Vagina (tissue), 2 donors: ENCODE measurements at regions of chr11 and their contacts with region 1.

Region 1: DNA sequence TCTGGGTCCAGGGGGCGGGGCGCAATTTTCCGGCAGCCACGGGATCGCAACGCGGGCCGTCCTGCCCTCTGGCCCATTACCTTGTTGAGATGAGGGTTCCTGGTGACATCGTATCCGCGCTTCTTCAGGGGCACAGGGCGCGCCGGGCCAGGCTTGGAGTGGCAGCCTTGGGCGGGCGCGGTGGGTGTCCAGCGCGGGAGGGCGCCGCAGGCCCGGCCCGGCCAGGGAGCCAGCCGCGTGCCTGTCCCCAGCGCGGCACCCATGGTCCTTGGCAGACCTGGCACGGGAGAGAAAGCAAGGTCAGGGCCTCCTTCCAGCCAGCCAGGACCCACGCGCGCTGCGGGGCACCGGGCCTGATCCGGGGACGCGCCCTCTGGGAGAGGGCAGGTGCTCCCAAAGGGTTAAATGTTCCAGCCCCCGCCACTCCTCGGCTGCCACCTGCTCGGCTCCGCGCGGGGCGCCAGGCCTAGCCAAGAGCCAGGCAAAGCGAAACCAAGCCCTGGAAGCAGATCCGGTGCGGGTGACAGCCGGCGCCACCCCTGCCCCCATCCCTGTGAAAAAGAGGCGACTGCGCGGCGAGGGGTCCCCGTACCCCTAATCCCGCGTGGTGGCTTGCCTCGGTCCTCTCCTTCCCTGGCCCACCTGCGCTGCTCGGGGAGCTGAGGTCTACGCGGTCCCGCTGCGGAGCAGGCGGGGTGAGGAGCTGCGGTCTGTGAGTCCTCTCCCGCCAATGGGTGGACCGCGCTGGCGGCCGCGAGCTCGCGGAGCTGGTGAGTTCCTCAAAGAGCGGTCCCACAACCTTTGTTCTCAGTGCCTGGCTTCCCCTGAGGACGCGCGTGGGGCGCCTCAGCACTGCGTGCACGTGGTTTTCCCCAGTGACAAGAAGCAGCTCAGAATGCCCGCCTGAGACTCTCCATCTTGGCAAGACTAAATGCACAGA is at the start of gene ME3:
- DNase-seq: no peak
- H3K4me3 ChIP-seq: peak within 1 kb of the TSS; percentile 82 to 86
- H3K27ac ChIP-seq: peak within 1 kb of the TSS; percentile 97
- H3K4me1 ChIP-seq: peaks cover 22% of the 10 kb centered on the region
- H3K27me3 ChIP-seq: no peaks in the 10 kb centered on the region
- CTCF ChIP-seq: no peak
- POLR2A ChIP-seq: peak in 1 of 2 donors; percentile 27
- total RNA-seq, gene ME3: 28.5 TPM

Region 2: GRCh38 chr11:86515297-86516094 is 156.5 kb before region 1 on chr11:
- intact Hi-C with region 1: no loop called
- DNase-seq: no peak
- H3K4me3 ChIP-seq: no peak overlapping the region
- H3K27ac ChIP-seq: no peak overlapping the region
- H3K4me1 ChIP-seq: peaks cover 32% of the 10 kb centered on the region
- H3K27me3 ChIP-seq: no peaks in the 10 kb centered on the region
- CTCF ChIP-seq: no peak
- POLR2A ChIP-seq: no peak

Region 3: DNA sequence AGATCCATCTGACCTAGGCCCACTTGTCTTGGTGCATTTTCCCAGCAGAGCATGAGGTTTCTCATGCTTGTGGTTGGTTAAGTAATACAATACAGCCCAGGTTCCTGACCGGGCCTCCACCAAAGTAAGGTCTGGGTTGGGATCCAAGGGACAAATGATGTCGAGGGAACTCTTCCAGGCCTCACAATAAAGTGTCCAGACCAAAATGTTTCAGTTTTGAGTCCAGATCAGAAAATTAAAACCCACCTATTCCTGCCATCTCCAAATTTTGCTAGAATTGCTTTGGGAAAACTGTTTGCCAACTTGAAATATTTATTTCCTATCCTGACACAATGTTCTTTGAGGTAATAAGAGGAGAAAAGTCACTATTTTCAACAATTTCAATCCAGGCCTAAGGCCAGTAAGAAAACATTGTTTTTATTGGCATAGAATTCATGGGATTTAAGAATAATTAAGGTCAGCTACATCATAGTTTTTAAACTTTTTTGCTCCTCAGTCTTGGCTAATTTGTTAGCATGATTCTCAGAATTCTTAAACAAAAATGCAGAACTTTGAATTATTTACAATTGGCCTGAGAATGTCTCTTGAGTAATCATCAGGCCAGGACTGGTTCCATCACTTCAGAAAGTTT is 50.9 kb before region 1 on chr11:
- intact Hi-C with region 1: loop called (anchors 10 kb)
- DNase-seq: no peak
- H3K4me3 ChIP-seq: no peak overlapping the region
- H3K27ac ChIP-seq: peak overlapping the region; percentile 68
- H3K4me1 ChIP-seq: peaks cover 26% of the 10 kb centered on the region
- H3K27me3 ChIP-seq: no peaks in the 10 kb centered on the region
- CTCF ChIP-seq: no peak
- POLR2A ChIP-seq: no peak

Region 4: DNA sequence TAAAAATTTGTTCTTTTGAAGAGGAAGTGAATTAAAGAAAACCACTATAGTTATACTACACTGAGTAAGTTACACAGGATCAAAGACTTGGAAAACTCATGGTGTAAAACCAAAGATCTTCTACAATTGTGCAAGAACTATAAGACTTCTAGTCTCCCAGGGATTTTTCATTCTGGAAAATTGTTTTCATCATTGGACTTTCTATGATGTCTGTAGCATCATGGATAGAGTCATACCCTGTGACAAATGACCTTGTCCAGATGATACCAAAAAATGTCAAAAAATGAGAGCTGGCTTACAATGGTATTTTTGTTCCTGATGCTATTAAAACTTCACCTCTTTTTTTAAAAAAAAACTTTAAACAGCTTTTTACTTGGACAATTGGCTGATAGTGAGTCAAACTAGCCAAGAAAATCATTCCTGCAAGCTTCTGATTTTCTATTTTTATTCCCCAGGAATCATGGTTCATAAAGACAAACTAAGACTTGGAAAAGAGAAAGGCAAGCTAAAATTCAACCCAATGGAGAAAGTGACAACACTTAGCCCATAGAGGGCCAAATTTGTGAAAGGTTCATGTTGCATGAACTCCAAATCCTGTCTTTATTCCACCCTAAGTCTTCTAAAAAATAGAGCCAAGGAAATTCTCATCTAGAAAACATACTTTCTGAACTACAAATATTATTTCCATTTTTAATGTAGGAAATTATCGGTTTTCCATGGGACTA is 30.3 kb before region 1 on chr11:
- intact Hi-C with region 1: loop called (anchors 2 kb)
- DNase-seq: no peak
- H3K4me3 ChIP-seq: no peak overlapping the region
- H3K27ac ChIP-seq: peak overlapping the region; percentile 18
- H3K4me1 ChIP-seq: peaks cover 13% of the 10 kb centered on the region
- H3K27me3 ChIP-seq: no peaks in the 10 kb centered on the region
- CTCF ChIP-seq: no peak
- POLR2A ChIP-seq: no peak

Region 5: DNA sequence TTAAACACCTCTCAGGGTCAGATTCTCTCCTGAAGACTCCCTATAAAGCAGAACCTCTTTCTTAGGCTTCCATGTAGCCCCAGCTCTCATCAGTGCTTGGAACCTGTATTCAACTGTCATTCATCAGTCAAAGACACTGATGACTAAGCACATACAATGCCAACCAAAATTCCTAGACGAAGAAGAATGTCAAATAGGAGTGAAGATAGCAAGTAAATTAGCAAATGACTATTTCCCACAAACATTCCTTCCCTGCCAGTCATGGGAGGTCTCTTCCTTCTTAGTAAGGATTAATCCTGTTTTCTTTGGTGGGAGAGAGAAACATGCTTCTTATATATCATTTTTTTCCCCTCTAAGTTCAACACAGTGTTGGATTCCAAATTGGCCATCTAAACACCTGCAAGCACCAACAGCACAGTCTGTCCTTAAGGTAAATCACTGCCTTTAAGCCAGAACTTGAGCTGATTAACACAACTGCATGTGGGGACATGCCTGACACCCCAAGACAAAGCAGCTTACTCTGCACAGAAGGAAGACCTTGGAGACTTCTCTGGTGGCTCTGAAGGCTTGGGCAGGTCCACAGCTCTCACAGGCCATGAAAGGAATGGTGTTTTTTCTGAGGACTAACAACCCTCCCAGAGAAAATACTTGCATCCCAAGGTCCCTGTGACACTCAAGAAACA is 48.0 kb after region 1 on chr11:
- intact Hi-C with region 1: no loop called
- DNase-seq: no peak
- H3K4me3 ChIP-seq: no peak overlapping the region
- H3K27ac ChIP-seq: peak overlapping the region; percentile 66
- H3K4me1 ChIP-seq: peaks cover 15% of the 10 kb centered on the region
- H3K27me3 ChIP-seq: no peaks in the 10 kb centered on the region
- CTCF ChIP-seq: no peak
- POLR2A ChIP-seq: no peak

Region 6: GRCh38 chr11:87072787-87073186 is 400.8 kb after region 1 on chr11:
- intact Hi-C with region 1: no loop called
- DNase-seq: no peak
- H3K4me3 ChIP-seq: no peak overlapping the region
- H3K27ac ChIP-seq: no peak overlapping the region
- H3K4me1 ChIP-seq: no peaks in the 10 kb centered on the region
- H3K27me3 ChIP-seq: no peaks in the 10 kb centered on the region
- CTCF ChIP-seq: no peak
- POLR2A ChIP-seq: no peak